ENCODE measurements at regions of chr2 and their contacts with region 1.

Region 1: DNA sequence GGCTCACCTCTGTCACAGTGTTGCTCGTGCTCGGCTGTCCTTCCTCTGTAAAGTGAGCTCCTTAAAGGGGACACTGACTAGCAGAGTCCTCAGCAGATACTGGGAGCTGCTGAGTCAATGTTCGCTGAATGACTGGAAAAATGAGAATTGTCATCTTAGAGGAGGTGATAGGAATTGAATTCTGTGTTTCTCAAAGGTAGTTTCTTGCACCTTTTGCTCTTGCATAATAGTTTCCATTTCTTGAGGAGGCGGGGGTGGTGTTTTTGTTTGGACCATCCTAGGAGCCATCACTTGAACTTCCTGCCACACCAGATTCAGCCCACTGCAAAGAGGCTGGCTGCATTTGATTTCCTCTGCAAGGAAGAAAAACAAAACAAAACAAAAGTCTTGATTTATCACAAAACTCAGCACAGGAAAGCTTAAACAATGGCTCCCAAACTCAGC is 11.4 kb upstream of the RFX8 start:
- DNase-seq: peak in 1 of 5 donors; percentile 18
- H3K4me3 ChIP-seq: peak overlapping the region in 1 of 2 donors; percentile 2
- H3K4me3 Mint-ChIP-seq: peak overlapping the region; percentile 7 to 83 (median 68)
- H3K27ac ChIP-seq: no peak overlapping the region
- H3K27ac Mint-ChIP-seq: peak overlapping the region; percentile 69 to 91 (median 82)
- H3K4me1 ChIP-seq: peaks cover 19% of the 10 kb centered on the region
- H3K4me1 Mint-ChIP-seq: peaks cover 16 to 26% (median 21%) of the 10 kb centered on the region in 4 donors
- H3K27me3 ChIP-seq: no peaks in the 10 kb centered on the region
- H3K27me3 Mint-ChIP-seq: no peaks in the 10 kb centered on the region

Region 2: DNA sequence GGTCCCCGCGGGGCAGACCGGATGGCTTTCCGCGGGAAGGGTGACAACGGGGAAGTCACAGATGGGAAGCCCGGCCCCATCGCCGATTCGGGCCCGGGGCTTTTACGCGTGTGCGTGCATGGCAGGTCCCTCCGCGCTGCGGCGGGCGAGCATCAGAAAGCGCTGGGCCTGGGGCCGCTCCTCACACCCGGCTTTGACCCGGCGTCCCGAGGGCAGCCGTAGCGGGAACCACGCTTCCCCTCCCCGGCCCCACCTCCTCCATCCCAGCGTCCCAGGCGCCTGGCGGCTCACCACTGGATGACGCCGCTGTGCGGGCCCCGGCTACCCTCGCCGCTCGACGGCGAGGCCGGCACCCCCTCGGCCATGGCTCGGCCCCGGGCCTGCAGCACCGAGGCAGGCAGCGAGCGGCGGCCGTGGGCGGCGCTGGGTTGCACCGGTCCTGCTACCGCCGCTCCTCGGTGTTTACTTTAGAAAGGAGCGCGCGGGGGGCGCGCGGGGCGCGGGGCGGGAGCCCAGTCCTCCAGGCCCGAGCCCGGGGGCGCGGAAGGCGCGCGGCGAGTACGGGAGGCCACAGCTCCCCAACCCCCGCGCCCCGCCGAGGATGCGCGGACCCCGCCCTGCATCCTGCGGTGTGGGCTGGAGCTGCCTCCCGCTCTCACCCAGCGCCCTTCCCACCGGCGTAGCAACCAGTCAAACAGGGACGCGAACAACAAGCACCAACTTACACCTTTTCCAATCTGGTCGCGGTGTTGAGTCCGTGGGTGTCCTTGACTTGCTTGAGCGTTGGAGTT is 12.2 kb before region 1 on chr2:
- CTCF ChIA-PET with region 1: interaction called, 3 read pairs
- POLR2A ChIA-PET with region 1: interaction called, 20 read pairs
- intact Hi-C with region 1: no loop called
- DNase-seq: peak in 4 of 5 donors; percentile 23 to 39 (median 36)
- H3K4me3 ChIP-seq: peak overlapping the region; percentile 26 to 63
- H3K4me3 Mint-ChIP-seq: peak overlapping the region; percentile 82 to 94 (median 89)
- H3K27ac ChIP-seq: no peak overlapping the region
- H3K27ac Mint-ChIP-seq: peak overlapping the region in 4 of 7 donors; percentile 35 to 84 (median 62)
- H3K4me1 ChIP-seq: peaks cover 17% of the 10 kb centered on the region
- H3K4me1 Mint-ChIP-seq: peaks cover 5 to 12% (median 7%) of the 10 kb centered on the region in 4 donors
- H3K27me3 ChIP-seq: no peaks in the 10 kb centered on the region
- H3K27me3 Mint-ChIP-seq: no peaks in the 10 kb centered on the region

Measured in CD4-positive, alpha-beta memory T cell (primary cell).